Dendritic cell treated with granulocyte-macrophage colony-stimulating factor and Interleukin-4, amounts not matched to agents 40 ng/mL and 50 ng/mL, for 4 days (primary cell): ENCODE measurements at regions of chr11 and their contacts with region 1.

Region 1: DNA sequence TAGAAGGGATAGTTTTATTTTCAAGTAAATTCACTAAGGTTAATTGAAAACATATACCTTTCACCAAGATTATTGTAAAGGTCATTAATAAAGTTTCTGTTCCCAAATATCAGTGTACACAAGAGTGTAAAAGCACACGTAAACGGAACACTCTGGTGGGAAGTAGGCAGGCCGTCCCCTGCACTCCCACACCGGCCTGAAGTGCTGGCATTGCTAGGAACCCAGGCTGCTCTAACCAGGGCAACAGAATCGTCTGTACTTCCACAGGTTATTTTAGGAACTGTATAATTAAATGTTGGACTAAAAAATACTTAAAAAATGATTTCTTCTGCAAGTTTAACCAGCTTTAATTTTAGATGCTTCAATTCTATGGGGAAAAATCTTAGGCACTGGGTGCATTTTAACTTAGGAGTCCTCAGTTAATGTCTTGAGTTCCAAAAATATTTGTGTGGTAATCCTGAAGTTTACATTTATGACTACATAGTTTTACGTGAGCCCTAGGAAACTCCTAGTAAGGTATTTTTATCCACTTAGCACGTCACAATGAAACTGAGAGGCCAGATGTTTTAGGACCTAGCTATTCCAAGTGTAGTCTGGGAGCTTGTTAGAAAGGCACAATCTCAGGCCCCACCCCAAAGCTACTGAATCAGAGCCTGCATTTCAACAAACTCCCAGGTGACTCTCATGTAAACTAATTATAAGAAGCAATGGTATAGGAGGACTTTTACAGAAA is 31.2 kb downstream of the KMT5B start:
- H3K4me3 Mint-ChIP-seq: no peak overlapping the region
- H3K27ac Mint-ChIP-seq: no peak overlapping the region
- H3K4me1 Mint-ChIP-seq: peaks cover 6% of the 10 kb centered on the region
- H3K27me3 Mint-ChIP-seq: no peaks in the 10 kb centered on the region

Region 2: DNA sequence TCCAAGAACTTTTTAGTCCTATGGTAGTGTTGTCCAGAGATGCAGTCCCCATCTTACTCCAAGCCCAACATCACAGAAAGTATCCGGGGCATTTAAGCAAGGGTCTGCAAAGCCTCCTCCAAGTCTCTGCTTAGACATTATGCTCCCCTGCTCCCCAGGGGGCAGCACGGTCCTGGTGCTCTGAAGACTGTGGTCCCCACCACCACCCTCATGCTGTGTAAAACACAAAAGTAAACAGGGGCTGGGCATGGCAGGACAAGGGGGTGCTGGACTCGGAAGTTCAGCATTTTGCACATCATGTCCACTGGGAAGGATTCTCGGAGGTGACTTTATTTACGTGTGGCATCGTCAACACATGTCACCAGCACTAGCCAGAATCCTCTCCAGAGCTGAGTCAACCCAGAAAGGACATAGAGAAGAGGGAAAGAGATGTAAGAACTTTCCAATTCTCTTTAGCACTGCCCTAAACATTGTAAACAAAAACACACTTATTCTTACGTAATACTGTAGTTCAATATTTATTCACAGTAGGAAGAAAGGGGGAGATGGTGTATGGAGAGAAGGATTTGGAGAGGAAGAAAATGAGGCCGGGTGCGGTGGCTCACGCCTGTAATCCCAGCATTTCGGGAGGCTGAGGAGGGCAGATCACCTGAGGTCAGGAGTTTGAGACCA is 105.4 kb before region 1 on chr11:
- intact Hi-C with region 1: loop called (anchors 10 kb)
- H3K4me3 Mint-ChIP-seq: no peak overlapping the region
- H3K27ac Mint-ChIP-seq: no peak overlapping the region
- H3K4me1 Mint-ChIP-seq: peaks cover 11% of the 10 kb centered on the region
- H3K27me3 Mint-ChIP-seq: no peaks in the 10 kb centered on the region

Region 3: GRCh38 chr11:68164437-68164836 is 17.4 kb before region 1 on chr11:
- intact Hi-C with region 1: no loop called
- H3K4me3 Mint-ChIP-seq: no peak overlapping the region
- H3K27ac Mint-ChIP-seq: no peak overlapping the region
- H3K4me1 Mint-ChIP-seq: no peaks in the 10 kb centered on the region
- H3K27me3 Mint-ChIP-seq: no peaks in the 10 kb centered on the region